ENCODE measurements at regions of chr3 and their contacts with region 1.

Region 1: DNA sequence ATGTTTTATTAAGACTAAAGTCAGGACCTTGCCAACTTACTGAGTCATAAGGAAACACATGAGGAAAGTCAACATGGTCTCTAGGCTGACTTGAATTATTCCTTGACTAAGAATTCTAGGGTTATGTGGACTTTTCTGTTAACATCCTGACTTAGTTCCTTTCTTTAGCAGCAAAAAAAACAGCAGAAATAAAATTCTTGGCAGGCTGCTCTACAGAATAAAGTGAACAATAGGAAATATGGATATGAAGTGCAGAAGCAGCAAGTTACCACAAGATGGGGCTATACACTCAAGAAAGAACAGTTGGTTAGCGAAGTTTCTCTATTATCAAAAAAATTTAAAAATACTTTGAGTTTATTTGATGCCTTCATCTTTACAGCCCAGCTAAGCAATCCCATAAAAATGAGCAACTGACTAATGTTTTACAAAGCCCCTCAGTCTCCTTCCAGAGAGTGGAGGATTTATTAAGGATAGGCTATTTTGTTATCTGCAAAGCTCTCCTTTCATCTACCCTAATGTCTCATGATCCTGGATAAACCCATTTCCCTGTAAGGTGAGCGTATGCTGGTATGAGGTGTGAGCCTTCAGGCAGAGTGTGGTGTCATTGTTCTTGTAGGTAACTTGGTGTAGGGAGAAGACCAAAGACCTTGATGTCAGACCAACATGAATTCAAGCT is 23.1 kb upstream of the MCCC1 start:
- DNase-seq: peak; percentile 9 to 51
- H3K4me3 ChIP-seq: no peak overlapping the region
- H3K27ac ChIP-seq: no peak overlapping the region
- H3K4me1 ChIP-seq: peaks cover 17% of the 10 kb centered on the region
- H3K27me3 ChIP-seq: no peaks in the 10 kb centered on the region
- CTCF ChIP-seq: peak; percentile 99

Region 2: GRCh38 chr3:182909318-182910040 is 212.9 kb before region 1 on chr3:
- CTCF ChIA-PET with region 1: no interaction called
- POLR2A ChIA-PET with region 1: no interaction called
- intact Hi-C with region 1: loop called (anchors 2 kb)
- DNase-seq: no peak
- H3K4me3 ChIP-seq: no peak overlapping the region
- H3K27ac ChIP-seq: no peak overlapping the region
- H3K4me1 ChIP-seq: no peaks in the 10 kb centered on the region
- H3K27me3 ChIP-seq: no peaks in the 10 kb centered on the region
- CTCF ChIP-seq: peak; percentile 83

Region 3: DNA sequence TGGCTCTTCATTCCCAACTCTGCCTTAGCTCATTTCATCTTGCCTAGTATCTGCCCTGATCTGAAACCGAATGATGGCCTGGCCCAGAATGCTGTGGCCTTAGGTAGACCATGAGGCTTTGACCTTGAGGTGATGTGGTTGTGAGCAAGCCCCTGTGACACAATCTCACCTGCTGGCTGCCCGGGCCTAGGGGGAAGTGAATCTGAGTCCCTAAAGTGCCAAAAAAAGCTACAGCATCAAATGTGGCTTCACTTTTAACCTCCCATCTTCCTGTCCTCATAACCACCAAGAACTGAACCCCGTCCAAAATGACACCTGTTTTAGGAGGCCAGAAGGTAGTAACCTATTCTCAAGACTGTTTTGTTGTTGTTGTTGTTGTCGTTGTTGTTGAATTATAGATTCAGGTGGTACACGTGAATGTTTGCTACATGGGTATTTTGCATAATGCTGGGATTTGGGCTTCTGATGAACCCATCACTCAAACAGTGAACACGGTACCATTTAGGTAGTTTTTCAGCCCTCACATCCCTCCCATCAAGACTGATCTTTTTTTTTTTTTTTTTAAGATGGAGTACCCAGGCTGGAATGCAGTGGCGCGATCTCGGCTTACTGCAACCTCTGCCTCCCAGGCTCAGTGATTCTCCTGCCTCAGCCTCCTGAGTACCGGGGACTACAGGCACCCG is 77.7 kb before region 1 on chr3:
- CTCF ChIA-PET with region 1: no interaction called
- POLR2A ChIA-PET with region 1: no interaction called
- intact Hi-C with region 1: no loop called
- DNase-seq: no peak
- H3K4me3 ChIP-seq: no peak overlapping the region
- H3K27ac ChIP-seq: no peak overlapping the region
- H3K4me1 ChIP-seq: no peaks in the 10 kb centered on the region
- H3K27me3 ChIP-seq: no peaks in the 10 kb centered on the region
- CTCF ChIP-seq: no peak

Region 4: GRCh38 chr3:183252973-183253901 is 130.8 kb after region 1 on chr3 and contains the start of gene B3GNT5:
- CTCF ChIA-PET with region 1: no interaction called
- POLR2A ChIA-PET with region 1: no interaction called
- intact Hi-C with region 1: loop called (anchors 5 kb)
- DNase-seq: peak; percentile 82 to 85
- H3K4me3 ChIP-seq: peak within 1 kb of the TSS; percentile 96
- H3K27ac ChIP-seq: peak within 1 kb of the TSS; percentile 93
- H3K4me1 ChIP-seq: peaks cover 31% of the 10 kb centered on the region
- H3K27me3 ChIP-seq: no peaks in the 10 kb centered on the region
- CTCF ChIP-seq: no peak
- total RNA-seq, gene B3GNT5: 30.7 and 33.6 TPM in 2 replicates

Region 5: DNA sequence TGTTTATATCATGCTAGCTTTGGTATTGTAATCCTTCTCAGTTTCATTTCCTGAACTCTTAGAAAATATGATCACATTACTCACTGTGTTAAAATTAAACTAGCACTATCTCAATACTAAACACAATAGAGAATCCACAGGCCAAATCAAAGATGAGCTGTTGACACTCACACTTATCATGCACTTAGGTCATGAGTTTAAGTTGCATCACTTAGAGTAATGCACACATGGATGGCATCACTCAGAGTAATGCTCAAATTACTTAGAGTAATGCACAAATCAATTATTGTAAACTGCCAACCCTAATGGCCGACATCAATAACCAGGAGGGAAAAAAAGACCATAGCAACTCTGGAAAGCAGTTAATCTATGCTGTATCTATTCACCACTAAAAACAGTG is 346.0 kb after region 1 on chr3:
- CTCF ChIA-PET with region 1: no interaction called
- POLR2A ChIA-PET with region 1: no interaction called
- intact Hi-C with region 1: loop called (anchors 1 kb)
- DNase-seq: no peak
- H3K4me3 ChIP-seq: no peak overlapping the region; the same call in 1 of the 2 replicates
- H3K27ac ChIP-seq: no peak overlapping the region
- H3K4me1 ChIP-seq: peaks cover 3% of the 10 kb centered on the region; the same call in 1 of the 2 replicates
- H3K27me3 ChIP-seq: no peaks in the 10 kb centered on the region
- CTCF ChIP-seq: no peak

Region 6: DNA sequence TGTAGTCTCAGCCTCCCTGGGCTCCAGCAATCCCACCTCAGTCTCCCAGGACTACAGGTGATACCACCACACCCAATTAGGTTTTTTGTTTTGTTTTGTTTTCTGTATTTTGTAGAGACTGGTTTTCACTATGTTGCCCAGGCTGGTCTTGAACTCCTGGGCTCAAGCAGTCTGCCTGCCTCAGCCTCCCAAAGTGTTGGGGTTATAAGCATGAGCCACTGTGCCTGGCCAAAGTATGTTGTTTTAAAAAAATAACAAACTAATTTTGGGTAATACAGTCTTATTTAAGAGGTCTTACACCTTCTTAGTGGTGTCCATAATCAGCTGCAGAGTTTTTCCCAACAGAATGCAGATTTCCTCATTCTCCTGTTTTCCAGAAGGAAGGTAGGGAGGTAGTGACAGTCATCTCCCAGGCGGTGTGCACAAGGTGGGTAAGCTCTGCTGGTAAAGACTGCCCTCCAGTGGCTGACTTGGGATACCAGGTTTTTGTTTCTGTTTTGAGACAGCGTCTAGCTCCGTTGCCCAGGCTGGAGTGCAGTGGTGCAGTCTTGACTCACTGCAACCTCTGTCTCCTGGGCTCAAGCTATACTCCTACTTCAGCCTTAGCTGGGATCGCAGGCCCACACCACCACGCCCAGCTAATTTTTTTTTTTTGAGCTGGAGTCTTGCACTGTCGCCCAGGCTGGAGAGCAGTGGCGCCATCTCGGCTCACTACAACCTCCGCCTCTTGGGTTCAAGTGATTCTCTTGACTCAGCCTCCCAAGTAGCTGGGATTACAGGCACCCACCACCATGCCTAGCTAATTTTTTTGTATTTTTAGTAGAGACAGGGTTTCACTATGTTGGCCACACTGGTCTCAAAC is 644.6 kb after region 1 on chr3:
- CTCF ChIA-PET with region 1: no interaction called
- POLR2A ChIA-PET with region 1: no interaction called
- intact Hi-C with region 1: loop called (anchors 2 kb)
- DNase-seq: peak; percentile 64 to 78
- H3K4me3 ChIP-seq: no peak overlapping the region
- H3K27ac ChIP-seq: no peak overlapping the region
- H3K4me1 ChIP-seq: peaks cover 17% of the 10 kb centered on the region
- H3K27me3 ChIP-seq: no peaks in the 10 kb centered on the region
- CTCF ChIP-seq: peak; percentile 95

Region 7: DNA sequence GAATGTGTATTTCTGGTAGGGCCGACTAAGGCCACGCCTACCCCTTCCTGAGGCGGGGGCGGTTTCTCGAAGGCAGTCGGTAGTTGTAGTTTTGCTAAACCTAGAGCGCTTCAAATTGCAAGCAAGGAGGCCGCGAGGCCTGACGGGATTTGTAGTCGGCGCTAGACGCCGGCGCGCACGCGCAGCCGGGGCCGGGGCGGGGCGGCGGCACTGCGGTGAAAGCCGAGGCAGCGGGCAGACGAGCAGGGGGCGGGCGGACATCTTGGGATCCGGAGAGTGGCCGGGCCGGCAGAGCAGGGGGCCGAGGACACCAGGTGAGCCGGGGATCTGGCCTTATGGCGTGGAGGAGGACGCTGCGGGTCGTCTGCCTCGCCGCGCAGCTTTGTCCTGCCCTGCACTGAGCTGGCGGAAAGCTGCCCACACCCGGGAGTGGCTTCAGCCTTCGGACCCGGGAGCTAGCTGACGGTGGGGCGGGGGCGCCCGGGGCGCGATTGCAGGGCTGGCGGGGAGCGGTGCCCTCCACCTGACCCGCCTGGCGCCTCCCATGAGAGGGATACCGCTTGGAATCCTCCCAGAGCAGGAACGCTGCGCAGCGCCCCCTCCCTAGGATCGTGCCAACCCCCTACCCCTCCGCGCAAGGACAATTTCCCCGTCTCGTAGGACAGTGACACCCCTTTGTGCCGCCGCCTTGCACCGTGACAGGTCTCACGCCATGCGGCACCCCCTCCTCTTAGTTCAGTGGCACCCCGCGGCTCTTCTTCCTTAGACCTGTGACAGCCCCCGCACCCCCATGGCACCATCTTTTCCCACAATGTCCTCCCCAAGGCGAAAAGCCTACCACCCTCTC is 1052.5 kb after region 1 on chr3 and contains the start of gene AP2M1:
- CTCF ChIA-PET with region 1: no interaction called
- POLR2A ChIA-PET with region 1: no interaction called
- intact Hi-C with region 1: no loop called
- DNase-seq: peak; percentile 99 to 100
- H3K4me3 ChIP-seq: peak within 1 kb of the TSS; percentile 91
- H3K27ac ChIP-seq: peak within 1 kb of the TSS; percentile 32
- H3K4me1 ChIP-seq: peaks cover 20% of the 10 kb centered on the region
- H3K27me3 ChIP-seq: no peaks in the 10 kb centered on the region
- CTCF ChIP-seq: no peak
- total RNA-seq, gene AP2M1: 586 and 606 TPM in 2 replicates